ENCODE measurements at regions of chr1 and their contacts with region 1.

Region 1: GRCh38 chr1:66262211-66262963 is 271.6 kb upstream of the SGIP1 start:
- DNase-seq: no peak
- ATAC-seq: no peak
- H3K4me3 ChIP-seq: no peak overlapping the region
- H3K27ac ChIP-seq: no peak overlapping the region
- H3K4me1 ChIP-seq: no peaks in the 10 kb centered on the region
- H3K27me3 ChIP-seq: no peaks in the 10 kb centered on the region

Region 2: DNA sequence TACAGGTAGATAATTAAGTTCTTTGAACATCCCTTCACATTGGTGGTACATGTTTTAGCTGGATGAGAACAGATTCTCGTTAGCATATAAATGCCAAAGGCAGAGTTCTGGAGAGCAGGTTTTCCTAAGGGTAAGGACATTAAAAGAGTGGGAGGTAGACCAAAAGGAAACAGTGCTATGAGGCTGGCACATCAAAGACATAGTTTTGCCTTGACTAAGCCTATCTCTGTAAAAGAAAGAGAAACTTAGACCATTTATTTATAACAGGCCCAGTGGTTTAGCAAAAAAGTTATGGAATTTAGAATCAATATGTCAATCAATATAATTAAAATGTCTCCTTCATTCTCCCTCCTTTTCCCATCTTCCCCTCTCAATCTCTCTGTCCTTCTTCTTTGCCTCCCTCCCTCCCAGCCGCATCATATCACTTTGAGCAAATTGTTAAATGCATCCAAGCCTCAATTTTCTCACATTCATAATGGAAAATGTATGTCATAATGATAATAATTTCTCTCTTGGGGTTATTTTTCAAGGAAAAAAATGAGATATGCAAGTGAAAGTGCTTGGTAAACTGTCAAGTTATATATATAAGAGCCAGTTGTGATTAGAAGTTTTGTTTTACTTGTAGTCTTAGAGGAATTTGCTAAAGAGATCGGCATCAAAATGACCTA is 61.7 kb after region 1 on chr1:
- intact Hi-C with region 1: loop called in 1 of 2 experiments (anchors 5 kb)
- DNase-seq: no peak
- ATAC-seq: no peak
- H3K4me3 ChIP-seq: no peak overlapping the region
- H3K27ac ChIP-seq: no peak overlapping the region
- H3K4me1 ChIP-seq: no peaks in the 10 kb centered on the region
- H3K27me3 ChIP-seq: no peaks in the 10 kb centered on the region

Region 3: GRCh38 chr1:66350001-66350547 is 87.7 kb after region 1 on chr1:
- intact Hi-C with region 1: no loop called
- DNase-seq: peak in 1 of 2 donors; percentile 62
- ATAC-seq: peak; percentile 40
- H3K4me3 ChIP-seq: no peak overlapping the region
- H3K27ac ChIP-seq: no peak overlapping the region
- H3K4me1 ChIP-seq: peaks cover 0 to 4% of the 10 kb centered on the region in 2 donors
- H3K27me3 ChIP-seq: no peaks in the 10 kb centered on the region

Measured in aorta (tissue), 5 donors.